Caco-2 (cell line): ENCODE measurements at regions of chr19 and their contacts with region 1.

Region 1: DNA sequence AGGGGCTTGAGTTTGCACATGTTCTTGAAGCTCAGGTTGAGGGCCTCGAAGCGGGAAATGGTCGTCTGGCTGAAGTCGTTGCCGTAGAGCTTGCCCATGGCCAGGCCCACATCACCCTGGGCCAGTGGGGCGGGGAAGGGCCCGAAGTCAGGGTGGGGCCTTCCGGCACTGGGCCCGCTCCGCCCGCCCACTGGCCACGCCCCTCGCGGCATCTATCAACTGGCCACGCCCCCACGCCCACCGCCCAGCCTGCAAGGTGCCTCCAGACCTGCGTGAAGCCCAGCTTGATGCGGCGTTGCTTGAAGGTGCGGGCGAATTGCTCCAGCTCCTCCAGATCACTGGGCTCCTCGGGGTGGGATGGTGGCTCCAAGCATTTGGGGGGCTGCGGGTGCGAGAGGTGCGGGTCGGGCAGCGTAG is 19.9 kb downstream of the ZNF574 start:
- DNase-seq: no peak
- H3K4me3 ChIP-seq: no peak overlapping the region
- H3K4me3 Mint-ChIP-seq: no peak overlapping the region
- H3K27ac Mint-ChIP-seq: no peak overlapping the region
- H3K4me1 ChIP-seq: peaks cover 4% of the 10 kb centered on the region; the same call in 1 of the 2 replicates
- H3K4me1 Mint-ChIP-seq: no peaks in the 10 kb centered on the region
- H3K27me3 ChIP-seq: no peaks in the 10 kb centered on the region
- H3K27me3 Mint-ChIP-seq: peaks cover 4% of the 10 kb centered on the region
- CTCF ChIP-seq: no peak

Region 2: DNA sequence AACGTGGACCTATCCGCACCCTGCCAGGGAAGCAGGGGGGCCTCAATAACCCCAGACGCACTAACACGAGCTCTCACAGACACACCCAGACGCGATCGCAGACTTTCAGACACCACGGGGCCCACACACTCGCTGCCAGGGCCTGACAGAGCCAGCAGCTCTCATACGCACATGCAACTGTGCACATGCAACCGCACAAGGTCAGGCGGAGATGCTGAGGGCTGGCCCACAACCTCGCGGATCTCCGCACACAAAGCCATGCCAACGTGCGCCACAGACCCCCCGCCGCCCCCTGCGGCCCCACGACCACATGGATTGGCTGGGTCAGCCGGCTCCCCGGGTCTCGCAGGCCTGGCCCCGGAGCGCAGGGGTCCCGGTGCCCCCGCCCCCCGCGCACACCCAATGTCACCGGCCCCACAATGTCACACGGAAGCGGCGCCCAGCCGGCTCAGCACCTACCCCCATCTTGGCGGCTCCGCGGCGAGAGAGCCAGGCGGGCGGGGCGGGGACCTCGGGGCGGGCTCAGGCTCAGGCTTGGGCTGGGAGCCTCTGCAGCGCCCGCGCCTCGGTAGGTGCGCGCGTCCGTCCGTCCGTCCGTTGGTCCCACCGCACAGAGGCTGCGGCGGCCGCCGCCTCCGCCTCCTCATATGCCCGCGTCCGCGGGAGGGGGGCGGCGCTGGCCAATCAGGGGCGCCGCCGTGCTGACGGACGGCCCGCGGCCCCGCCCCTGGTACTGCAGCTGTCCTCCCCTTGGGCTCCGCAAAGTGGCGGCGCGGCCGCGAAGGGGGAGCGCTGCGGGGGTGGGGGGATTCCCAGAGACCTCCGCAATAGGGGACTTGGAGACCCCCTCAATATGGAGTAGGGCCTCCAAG is 102.0 kb before region 1 on chr19 and contains the start of gene ATP1A3:
- CTCF ChIA-PET with region 1: interaction called, 11 read pairs
- POLR2A ChIA-PET with region 1: no interaction called
- intact Hi-C with region 1: no loop called
- DNase-seq: peak in 1 of 2 experiments; percentile 74
- H3K4me3 ChIP-seq: peak within 1 kb of the TSS; percentile 42
- H3K4me3 Mint-ChIP-seq: peak within 1 kb of the TSS; percentile 57
- H3K27ac Mint-ChIP-seq: no peak within 1 kb of the TSS
- H3K4me1 ChIP-seq: peaks cover 6% of the 10 kb centered on the region
- H3K4me1 Mint-ChIP-seq: no peaks in the 10 kb centered on the region
- H3K27me3 ChIP-seq: peaks cover 6% of the 10 kb centered on the region
- H3K27me3 Mint-ChIP-seq: peaks cover 36% of the 10 kb centered on the region
- CTCF ChIP-seq: no peak
- total RNA-seq, gene ATP1A3: 0.54 and 0.84 TPM in 2 replicates

Region 3: DNA sequence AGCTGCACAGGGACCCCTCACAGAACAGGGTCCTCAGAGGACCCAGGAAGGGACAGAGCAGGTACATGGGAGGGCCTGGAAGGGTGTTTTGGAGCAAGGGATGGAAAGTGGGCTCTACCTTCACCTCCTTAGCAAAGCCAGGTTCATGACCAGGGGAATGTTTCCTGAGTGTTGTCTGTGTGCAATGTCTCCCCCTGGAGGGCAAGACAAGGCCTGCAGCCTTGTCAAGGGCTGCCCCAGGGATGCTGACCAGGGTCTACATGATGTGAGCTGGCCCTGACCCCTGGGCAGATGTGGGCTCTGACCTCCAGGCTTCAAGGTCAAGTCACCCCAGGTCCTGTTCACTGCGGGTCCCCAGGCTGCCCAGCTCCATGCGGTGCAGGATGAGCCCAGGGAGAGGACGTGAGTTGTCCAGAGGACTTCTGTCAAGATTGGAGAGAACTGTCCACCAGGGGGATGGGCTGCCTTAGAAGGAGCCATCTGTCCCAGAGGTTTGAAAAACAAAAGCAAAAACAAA is 433.5 kb after region 1 on chr19:
- CTCF ChIA-PET with region 1: no interaction called
- POLR2A ChIA-PET with region 1: no interaction called
- intact Hi-C with region 1: no loop called
- DNase-seq: peak; percentile 74 to 85
- H3K4me3 ChIP-seq: no peak overlapping the region
- H3K4me3 Mint-ChIP-seq: no peak overlapping the region
- H3K27ac Mint-ChIP-seq: peak overlapping the region; percentile 27
- H3K4me1 ChIP-seq: peaks cover 17% of the 10 kb centered on the region
- H3K4me1 Mint-ChIP-seq: peaks cover 32% of the 10 kb centered on the region
- H3K27me3 ChIP-seq: no peaks in the 10 kb centered on the region
- H3K27me3 Mint-ChIP-seq: no peaks in the 10 kb centered on the region
- CTCF ChIP-seq: peak; percentile 95 to 98